Natural killer cell (primary cell): ENCODE measurements at regions of chr20 and their contacts with region 1.

Region 1: DNA sequence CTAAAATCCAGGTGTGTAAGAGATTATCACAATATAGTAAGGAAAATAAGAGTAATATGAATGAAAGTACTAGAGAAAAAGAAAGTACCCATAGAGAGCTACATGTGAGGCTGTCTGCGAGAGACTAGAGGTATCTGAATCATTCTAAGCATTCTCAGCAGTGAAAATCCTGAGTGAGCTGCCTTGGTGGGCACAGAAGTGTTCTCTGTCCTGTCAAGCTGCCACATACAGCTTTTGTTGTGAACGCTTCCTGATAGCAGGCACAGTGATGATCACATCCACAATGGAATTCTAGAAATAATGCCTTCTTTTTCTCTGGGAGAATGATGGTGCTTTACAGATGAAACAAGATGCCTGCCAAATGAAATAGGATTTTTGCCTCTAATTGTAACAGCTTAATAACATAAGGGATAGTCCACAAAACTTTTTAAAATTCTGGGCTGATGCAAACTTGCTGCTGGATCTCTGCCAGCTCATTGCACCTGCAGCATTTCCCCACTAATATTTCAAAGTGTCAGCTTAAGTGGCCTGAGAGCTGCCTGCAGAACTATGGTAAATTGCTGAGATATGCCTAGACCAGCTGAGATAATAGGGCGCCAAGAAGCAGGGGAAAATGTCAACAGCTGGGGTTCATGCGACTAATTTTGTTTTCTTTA is 620.5 kb downstream of the DOK5 start:
- DNase-seq: no peak
- ATAC-seq: no peak
- H3K4me3 ChIP-seq: no peak overlapping the region
- H3K4me3 Mint-ChIP-seq: no peak overlapping the region
- H3K27ac ChIP-seq: no peak overlapping the region
- H3K27ac Mint-ChIP-seq: no peak overlapping the region
- H3K4me1 ChIP-seq: no peaks in the 10 kb centered on the region
- H3K4me1 Mint-ChIP-seq: no peaks in the 10 kb centered on the region
- H3K27me3 ChIP-seq: no peaks in the 10 kb centered on the region
- H3K27me3 Mint-ChIP-seq: no peaks in the 10 kb centered on the region
- CTCF ChIP-seq: no peak

Region 2: DNA sequence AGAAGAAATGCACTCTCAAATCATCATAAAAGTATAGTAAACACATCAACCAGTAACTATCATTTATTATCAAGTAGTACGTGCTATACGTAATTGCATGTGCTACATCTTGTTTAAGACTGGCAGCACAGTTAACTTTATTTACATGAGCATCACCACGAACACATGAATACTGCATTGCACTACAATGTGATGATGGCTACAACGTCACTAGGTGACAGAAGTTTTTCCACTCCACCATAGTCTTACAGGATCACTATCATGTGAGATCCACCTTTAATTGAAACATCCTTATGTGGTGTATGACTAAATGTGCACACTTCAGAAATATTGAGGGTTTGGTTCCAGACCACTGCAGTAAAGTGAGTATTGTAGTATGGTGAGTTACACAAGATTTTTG is 138.6 kb before region 1 on chr20:
- intact Hi-C with region 1: no loop called
- DNase-seq: no peak
- ATAC-seq: no peak
- H3K4me3 ChIP-seq: no peak overlapping the region
- H3K4me3 Mint-ChIP-seq: no peak overlapping the region
- H3K27ac ChIP-seq: no peak overlapping the region
- H3K27ac Mint-ChIP-seq: no peak overlapping the region
- H3K4me1 ChIP-seq: no peaks in the 10 kb centered on the region
- H3K4me1 Mint-ChIP-seq: no peaks in the 10 kb centered on the region
- H3K27me3 ChIP-seq: no peaks in the 10 kb centered on the region
- H3K27me3 Mint-ChIP-seq: no peaks in the 10 kb centered on the region
- CTCF ChIP-seq: no peak

Region 3: DNA sequence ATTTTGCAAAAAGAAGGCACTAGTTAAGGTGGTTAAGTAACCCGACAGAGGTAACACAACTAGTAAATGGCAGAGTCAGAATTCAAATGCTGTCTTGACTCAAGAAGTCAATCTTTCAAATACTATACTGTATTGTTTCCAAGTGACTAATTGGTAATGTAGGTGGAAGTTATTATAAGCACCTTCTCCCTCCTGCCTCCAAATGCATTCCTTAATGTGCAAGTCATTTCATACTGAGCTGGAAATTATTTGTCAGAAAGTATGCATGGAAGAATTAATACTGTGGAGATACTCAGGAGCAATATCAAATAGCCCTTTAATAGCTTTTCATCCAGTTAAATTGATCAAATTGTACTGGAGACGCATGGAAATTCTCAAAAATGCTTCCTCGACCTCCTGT is 41.4 kb before region 1 on chr20:
- intact Hi-C with region 1: loop called (anchors 10 kb)
- DNase-seq: no peak
- ATAC-seq: no peak
- H3K4me3 ChIP-seq: no peak overlapping the region
- H3K4me3 Mint-ChIP-seq: no peak overlapping the region
- H3K27ac ChIP-seq: no peak overlapping the region
- H3K27ac Mint-ChIP-seq: no peak overlapping the region
- H3K4me1 ChIP-seq: no peaks in the 10 kb centered on the region
- H3K4me1 Mint-ChIP-seq: no peaks in the 10 kb centered on the region
- H3K27me3 ChIP-seq: no peaks in the 10 kb centered on the region
- H3K27me3 Mint-ChIP-seq: no peaks in the 10 kb centered on the region
- CTCF ChIP-seq: no peak

Region 4: DNA sequence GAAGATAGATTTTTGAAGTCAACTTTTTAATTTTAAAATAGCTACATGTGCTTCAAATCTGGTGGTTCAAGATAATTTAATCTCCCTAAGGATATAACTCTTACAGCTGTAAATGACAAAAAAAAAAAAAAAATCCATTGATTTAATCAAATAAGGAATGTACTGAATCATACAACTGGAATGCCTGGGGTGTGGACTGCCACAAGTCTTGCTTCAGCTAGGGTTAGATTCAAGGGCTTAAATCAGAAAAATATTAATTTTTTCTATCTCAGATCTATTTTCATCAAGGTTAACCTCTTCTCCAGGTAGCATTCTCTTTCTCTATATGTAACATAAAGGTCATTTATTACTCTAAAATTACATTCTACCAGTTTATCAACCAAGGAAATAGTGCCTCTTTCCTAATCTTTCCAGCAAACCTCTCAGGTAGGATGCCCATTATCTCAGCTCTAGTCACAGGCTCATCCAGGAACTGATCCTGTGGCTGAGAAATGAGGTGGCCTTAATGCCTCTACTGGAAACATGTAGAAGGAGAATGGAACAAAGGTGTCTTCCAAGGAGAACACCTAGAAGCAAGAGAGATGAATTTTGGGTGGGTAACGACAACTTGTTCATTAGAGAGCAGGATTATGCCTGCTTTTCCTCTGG is 442.5 kb after region 1 on chr20:
- intact Hi-C with region 1: no loop called
- DNase-seq: no peak
- ATAC-seq: no peak
- H3K4me3 ChIP-seq: no peak overlapping the region
- H3K4me3 Mint-ChIP-seq: no peak overlapping the region
- H3K27ac ChIP-seq: no peak overlapping the region
- H3K27ac Mint-ChIP-seq: no peak overlapping the region
- H3K4me1 ChIP-seq: no peaks in the 10 kb centered on the region
- H3K4me1 Mint-ChIP-seq: no peaks in the 10 kb centered on the region
- H3K27me3 ChIP-seq: no peaks in the 10 kb centered on the region
- H3K27me3 Mint-ChIP-seq: no peaks in the 10 kb centered on the region
- CTCF ChIP-seq: no peak